Activated B cell treated with CpG ODN at 0.5 μM for 24 hours (primary cell): ENCODE measurements at regions of chr9 and their contacts with region 1.

Region 1: GRCh38 chr9:34989003-34989945 is at the start of gene DNAJB5:
- DNase-seq: peak; percentile 96
- ATAC-seq: peak; percentile 91
- H3K4me3 Mint-ChIP-seq: peak within 1 kb of the TSS; percentile 97
- H3K27ac Mint-ChIP-seq: peak within 1 kb of the TSS; percentile 92
- H3K4me1 Mint-ChIP-seq: peaks cover 77% of the 10 kb centered on the region
- H3K27me3 Mint-ChIP-seq: peaks cover 2% of the 10 kb centered on the region
- CTCF ChIP-seq: no peak
- total RNA-seq, gene DNAJB5: 5.4 and 6.4 TPM in 2 replicates

Region 2: DNA sequence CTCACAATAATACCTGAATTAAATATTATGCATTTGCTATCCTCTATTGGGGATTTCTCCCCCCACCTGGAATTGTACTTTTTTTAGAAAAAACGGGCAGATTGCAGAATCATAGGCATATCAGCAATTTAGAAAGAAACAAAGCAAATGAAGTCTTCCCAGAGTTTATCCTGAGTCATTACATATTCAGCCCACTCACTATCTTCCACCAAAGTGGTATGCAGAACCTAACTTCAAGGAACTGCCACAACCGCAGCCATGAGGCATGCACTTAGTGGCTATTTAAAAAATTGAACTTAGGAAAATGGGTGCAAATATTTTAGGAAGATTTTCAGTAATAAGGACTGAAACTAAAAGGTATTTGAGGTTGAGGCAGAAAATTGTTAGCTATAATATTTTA is 761.8 kb before region 1 on chr9:
- CTCF ChIA-PET with region 1: no interaction called
- POLR2A ChIA-PET with region 1: no interaction called
- intact Hi-C with region 1: no loop called
- DNase-seq: no peak
- ATAC-seq: no peak
- H3K4me3 Mint-ChIP-seq: no peak overlapping the region
- H3K27ac Mint-ChIP-seq: no peak overlapping the region
- H3K4me1 Mint-ChIP-seq: no peaks in the 10 kb centered on the region
- H3K27me3 Mint-ChIP-seq: no peaks in the 10 kb centered on the region
- CTCF ChIP-seq: no peak

Region 3: DNA sequence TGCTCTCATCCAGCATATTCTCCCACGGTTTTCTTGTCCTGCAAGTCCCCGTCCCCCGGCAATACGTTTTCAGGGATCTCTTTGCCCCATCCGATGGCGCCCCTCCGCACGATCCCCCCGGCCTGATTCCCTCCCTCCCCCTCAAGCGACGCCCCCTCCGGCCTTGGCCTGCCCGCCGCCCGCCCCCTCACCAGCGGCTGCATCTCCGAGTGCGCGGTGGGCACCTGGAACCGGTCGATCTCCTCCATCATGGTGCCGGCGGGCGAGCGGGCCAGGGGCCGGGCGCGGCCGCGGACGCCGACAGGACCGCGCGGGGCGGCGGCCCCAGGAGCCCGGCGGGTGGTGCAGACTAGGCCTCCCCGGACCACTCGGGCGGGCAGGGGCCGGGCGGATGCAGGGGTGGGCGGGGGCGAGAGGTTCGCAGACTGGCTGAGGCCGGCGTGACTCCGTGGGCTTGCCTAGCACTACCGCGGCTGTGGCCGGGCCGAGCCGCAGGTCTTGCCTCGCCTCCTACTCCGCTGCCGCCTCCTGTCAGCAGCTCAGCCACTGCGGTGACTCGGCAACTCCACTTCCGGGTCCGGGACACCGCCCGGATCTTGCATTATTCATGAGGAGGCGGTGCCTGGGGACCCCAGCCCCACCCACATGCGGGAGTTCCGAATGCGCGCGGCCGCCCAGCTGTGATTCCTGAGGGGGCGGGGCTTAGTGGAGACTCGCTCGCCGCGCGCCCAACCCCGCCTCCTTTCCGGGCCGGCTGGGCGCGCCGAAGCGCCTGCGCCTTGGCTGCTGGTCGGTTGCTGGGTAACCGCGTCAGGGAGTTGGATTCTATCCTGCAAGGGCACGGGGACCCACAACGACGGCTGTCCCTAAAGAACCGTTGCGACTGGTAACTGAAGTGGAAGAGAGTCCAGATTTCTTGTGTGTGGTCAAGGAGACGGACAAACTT is 531.0 kb before region 1 on chr9 and contains the starts of genes DNAI1 and FAM219A:
- CTCF ChIA-PET with region 1: no interaction called
- POLR2A ChIA-PET with region 1: interaction called, 4 read pairs
- intact Hi-C with region 1: loop called (anchors 5 kb)
- DNase-seq: peak; percentile 99
- ATAC-seq: peak; percentile 92
- H3K4me3 Mint-ChIP-seq: peak within 1 kb of the TSS; percentile 90
- H3K27ac Mint-ChIP-seq: peak within 1 kb of the TSS; percentile 68
- H3K4me1 Mint-ChIP-seq: peaks cover 34% of the 10 kb centered on the region
- H3K27me3 Mint-ChIP-seq: peaks cover 12% of the 10 kb centered on the region
- CTCF ChIP-seq: no peak
- total RNA-seq, gene DNAI1: not detected in 2 replicates
- total RNA-seq, gene FAM219A: 13.5 and 16.9 TPM in 2 replicates

Region 4: GRCh38 chr9:34665381-34666250 is 323.7 kb before region 1 on chr9:
- CTCF ChIA-PET with region 1: no interaction called
- POLR2A ChIA-PET with region 1: no interaction called
- intact Hi-C with region 1: loop called (anchors 1 kb)
- DNase-seq: peak; percentile 75
- ATAC-seq: peak; percentile 90
- H3K4me3 Mint-ChIP-seq: peak overlapping the region; percentile 88
- H3K27ac Mint-ChIP-seq: peak overlapping the region; percentile 87
- H3K4me1 Mint-ChIP-seq: peaks cover 11% of the 10 kb centered on the region
- H3K27me3 Mint-ChIP-seq: no peaks in the 10 kb centered on the region
- CTCF ChIP-seq: no peak

Region 5: GRCh38 chr9:35071814-35072460 is 82.7 kb after region 1 on chr9:
- CTCF ChIA-PET with region 1: no interaction called
- POLR2A ChIA-PET with region 1: interaction called, 10 read pairs
- intact Hi-C with region 1: loop called (anchors 1 kb)
- DNase-seq: peak; percentile 80
- ATAC-seq: peak; percentile 63
- H3K4me3 Mint-ChIP-seq: peak overlapping the region; percentile 89
- H3K27ac Mint-ChIP-seq: peak overlapping the region; percentile 93
- H3K4me1 Mint-ChIP-seq: peaks cover 51% of the 10 kb centered on the region
- H3K27me3 Mint-ChIP-seq: no peaks in the 10 kb centered on the region
- CTCF ChIP-seq: no peak

Region 6: DNA sequence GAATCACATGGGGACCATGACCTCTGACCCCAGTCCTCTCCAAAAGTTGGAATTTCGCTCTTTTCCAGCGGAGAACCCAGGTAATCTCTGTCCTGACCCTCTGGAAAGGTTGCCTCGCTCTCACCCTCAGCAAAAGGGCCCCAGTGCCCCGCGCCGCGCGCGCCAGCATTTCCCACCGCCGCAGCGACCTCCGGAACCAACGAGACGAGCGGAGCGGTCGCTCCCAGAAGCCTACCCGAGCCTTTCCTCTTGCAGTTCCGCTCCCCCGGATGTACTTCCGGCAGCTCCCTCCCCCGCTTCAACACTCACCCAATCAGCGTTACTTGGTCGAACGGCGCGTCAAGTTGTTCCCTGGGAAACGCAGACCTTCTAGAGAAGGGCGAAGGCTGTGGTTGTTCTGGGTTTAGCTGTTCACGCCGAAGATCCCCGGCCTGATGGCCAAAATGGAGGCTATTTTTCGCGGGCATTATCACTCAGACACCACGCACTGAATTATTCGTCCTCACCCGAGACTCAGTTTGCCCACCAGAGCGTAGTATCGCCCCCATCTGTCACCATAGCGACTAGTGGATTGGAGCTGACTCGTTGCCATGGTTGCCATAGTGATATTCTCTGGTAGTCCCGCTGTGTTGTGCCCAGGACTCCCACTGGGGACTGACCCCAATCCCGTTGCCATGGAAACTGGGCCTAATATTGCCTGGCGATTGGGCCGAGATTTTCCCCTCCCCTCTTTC is 113.8 kb after region 1 on chr9 and contains the start of gene STOML2:
- CTCF ChIA-PET with region 1: no interaction called
- POLR2A ChIA-PET with region 1: interaction called, 4 read pairs
- intact Hi-C with region 1: loop called (anchors 2 kb)
- DNase-seq: peak; percentile 82
- ATAC-seq: peak; percentile 97
- H3K4me3 Mint-ChIP-seq: peak within 1 kb of the TSS; percentile 97
- H3K27ac Mint-ChIP-seq: peak within 1 kb of the TSS; percentile 97
- H3K4me1 Mint-ChIP-seq: peaks cover 25% of the 10 kb centered on the region
- H3K27me3 Mint-ChIP-seq: no peaks in the 10 kb centered on the region
- CTCF ChIP-seq: no peak
- total RNA-seq, gene STOML2: 108 and 113 TPM in 2 replicates

Region 7: GRCh38 chr9:35657546-35658136 is 668.4 kb after region 1 on chr9 and contains the start of gene RMRP:
- CTCF ChIA-PET with region 1: no interaction called
- POLR2A ChIA-PET with region 1: no interaction called
- intact Hi-C with region 1: loop called (anchors 2 kb)
- DNase-seq: peak; percentile 81
- ATAC-seq: peak; percentile 81
- H3K4me3 Mint-ChIP-seq: peak within 1 kb of the TSS; percentile 88
- H3K27ac Mint-ChIP-seq: peak within 1 kb of the TSS; percentile 99
- H3K4me1 Mint-ChIP-seq: peaks cover 78% of the 10 kb centered on the region
- H3K27me3 Mint-ChIP-seq: peaks cover 5% of the 10 kb centered on the region
- CTCF ChIP-seq: no peak
- total RNA-seq, gene RMRP: 8,247 and 9,516 TPM in 2 replicates